Left ventricle myocardium superior (tissue), 1 donor: ENCODE measurements at regions of chr3 and their contacts with region 1.

Region 1: DNA sequence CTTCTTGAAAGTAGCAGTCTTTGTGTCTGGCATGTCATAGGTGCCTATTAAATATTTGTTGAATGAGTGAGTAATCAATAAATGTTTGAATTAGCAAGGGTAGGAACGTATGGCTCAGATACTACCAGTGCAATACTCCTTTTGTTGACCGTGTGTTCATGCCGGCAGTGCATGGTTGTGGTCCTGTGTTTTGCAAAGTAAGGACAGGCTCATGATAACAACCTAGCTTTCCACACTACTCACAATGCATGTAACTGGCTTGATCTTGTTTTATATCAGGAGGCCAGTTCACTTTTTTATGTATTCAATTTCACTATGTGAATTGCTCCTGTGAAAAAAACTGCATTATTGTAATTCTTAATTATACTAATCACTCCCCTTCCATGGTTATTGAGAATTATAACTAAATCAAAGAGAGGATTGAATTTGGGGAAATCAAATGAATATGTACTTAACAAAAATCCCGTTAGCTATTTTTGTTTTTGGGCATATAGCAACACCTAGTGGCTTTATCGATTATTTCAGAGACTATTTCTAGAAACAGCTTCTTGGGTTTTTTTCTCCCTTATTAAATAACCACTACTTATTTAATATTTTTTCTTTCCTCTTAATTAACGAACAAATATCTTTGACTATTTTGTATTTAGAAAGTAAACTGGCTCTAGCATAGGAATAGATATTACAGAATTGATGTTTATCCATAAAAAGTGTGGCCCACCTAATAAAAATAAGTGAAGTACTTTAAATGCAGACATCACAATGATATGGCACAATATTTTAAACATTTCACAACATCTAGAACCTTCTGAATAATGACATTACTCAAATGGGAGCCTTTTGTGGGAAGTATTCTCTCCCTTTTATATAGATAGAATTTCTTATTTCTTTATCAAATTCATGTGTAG is 218.5 kb downstream of the BBX start:
- DNase-seq: no peak
- ATAC-seq: no peak

Region 2: GRCh38 chr3:107680698-107681097 is 60.5 kb before region 1 on chr3:
- intact Hi-C with region 1: loop called (anchors 10 kb)
- DNase-seq: no peak
- ATAC-seq: no peak